ENCODE measurements at regions of chr10 and their contacts with region 1.

Region 1: DNA sequence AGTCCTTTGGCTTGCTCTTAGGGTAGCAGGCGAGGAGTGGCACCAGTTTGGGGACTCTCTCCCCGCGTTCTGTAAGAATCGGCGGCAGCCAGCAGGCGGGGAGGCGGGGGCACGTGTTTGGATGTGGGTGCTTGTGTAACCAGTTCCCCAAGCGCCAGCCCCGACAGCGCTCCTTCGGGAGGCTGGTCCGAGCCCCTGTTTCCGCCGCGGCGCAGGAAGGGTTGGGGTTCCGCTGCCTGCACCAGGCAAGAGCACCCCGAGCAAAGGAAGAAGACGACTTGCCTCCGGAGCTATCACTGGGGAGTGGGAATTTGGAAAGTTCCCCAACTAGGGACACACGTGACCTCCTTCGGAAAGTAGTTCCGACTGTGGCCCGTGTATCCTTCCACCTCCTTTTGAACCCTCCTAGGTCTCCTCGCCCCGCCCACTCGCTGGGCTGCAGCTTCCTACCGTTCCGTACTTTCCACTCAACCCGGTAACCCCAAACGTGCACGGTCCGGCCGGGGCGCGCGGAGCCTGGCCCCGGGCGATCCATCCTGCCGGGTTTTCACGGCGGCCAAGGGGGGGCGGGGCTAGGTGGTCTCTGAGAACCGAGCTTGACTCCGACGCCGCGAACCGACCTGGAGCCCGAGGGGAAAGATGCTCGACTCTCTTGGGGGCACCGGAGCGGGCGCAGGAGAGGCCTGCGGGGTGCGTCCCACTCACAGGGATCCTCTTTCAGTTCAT is 1.2 kb downstream of the KLLN start:
- DNase-seq: peak; percentile 82 to 88
- H3K4me3 ChIP-seq: peak overlapping the region; percentile 98
- H3K27ac ChIP-seq: peak overlapping the region; percentile 77
- H3K4me1 ChIP-seq: peaks cover 15% of the 10 kb centered on the region
- H3K27me3 ChIP-seq: no peaks in the 10 kb centered on the region
- CTCF ChIP-seq: no peak

Region 2: GRCh38 chr10:87782721-87783120 is 79.4 kb before region 1 on chr10:
- CTCF ChIA-PET with region 1: no interaction called
- POLR2A ChIA-PET with region 1: no interaction called
- intact Hi-C with region 1: no loop called
- DNase-seq: no peak
- H3K4me3 ChIP-seq: no peak overlapping the region
- H3K27ac ChIP-seq: no peak overlapping the region
- H3K4me1 ChIP-seq: no peaks in the 10 kb centered on the region
- H3K27me3 ChIP-seq: no peaks in the 10 kb centered on the region
- CTCF ChIP-seq: no peak

Region 3: DNA sequence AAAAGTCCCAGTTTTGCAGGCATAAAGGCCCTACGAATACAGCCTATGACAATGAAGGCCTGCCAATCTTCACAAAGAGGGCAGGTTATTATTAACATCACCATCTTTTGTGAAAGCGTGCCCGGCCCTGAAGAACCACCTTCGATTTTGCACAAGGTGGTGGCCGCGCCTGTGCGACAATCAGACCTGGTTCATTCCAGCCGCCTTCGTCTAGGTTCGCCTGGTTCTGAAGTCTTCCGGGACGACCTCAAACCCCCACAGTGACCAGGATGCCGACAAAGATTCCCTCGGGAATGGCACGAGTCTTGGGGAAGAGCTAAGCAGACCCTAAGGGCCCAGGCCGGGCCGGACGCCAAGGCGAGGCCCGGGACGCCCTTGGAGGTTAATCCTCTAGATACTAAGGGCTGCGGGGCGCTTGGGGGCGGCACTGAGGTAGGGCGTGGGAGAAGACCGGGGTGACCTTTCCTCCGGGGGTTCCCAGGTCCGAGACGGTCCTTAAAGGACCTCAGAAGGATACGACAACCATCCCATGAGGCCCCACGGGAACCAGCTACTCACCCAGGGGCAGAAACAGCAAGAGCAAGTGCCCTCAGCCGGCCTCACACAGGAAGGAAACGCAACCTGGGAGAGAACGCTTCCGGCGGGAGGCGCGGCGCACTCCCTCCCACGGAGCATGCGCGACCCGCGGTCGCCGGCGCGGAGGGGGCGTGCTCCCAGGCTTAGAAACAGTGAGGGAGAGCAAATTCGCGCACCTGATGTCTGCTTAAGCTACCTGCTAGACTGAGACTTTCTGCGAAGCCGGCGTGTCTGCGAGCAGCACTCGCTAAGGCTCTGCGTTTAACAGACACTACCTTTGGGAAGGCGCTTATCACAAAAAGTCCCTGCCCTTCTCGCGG is 44.3 kb before region 1 on chr10 and contains the start of gene ATAD1:
- CTCF ChIA-PET with region 1: no interaction called
- POLR2A ChIA-PET with region 1: interaction called, 19 read pairs
- intact Hi-C with region 1: loop called (anchors 5 kb)
- DNase-seq: peak; percentile 73 to 81
- H3K4me3 ChIP-seq: peak within 1 kb of the TSS; percentile 88
- H3K27ac ChIP-seq: peak within 1 kb of the TSS; percentile 80
- H3K4me1 ChIP-seq: peaks cover 24% of the 10 kb centered on the region
- H3K27me3 ChIP-seq: no peaks in the 10 kb centered on the region
- CTCF ChIP-seq: no peak
- total RNA-seq, gene ATAD1: 21.8 and 26.3 TPM in 2 replicates

Region 4: DNA sequence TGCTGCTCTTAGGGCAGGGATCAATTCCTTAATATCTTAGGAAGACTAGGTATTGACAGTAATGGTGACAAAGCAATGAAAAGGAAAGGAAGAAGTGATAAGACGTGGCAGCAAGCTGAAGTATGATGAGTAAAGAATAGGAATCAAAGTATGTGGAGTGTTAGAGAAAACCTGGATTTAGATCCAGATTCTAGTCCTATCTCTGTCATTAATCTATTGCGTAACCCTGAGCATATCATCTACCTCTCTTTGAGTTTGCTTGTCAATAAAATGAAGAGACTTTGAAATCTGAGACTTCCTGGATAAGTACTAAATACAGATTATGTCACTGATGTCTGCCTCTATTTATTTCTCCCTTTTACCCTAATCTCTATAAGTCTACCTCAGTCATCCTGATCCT is 90.5 kb after region 1 on chr10:
- CTCF ChIA-PET with region 1: no interaction called
- POLR2A ChIA-PET with region 1: no interaction called
- intact Hi-C with region 1: no loop called
- DNase-seq: no peak
- H3K4me3 ChIP-seq: no peak overlapping the region
- H3K27ac ChIP-seq: no peak overlapping the region
- H3K4me1 ChIP-seq: peaks cover 18% of the 10 kb centered on the region
- H3K27me3 ChIP-seq: no peaks in the 10 kb centered on the region
- CTCF ChIP-seq: no peak

Region 5: DNA sequence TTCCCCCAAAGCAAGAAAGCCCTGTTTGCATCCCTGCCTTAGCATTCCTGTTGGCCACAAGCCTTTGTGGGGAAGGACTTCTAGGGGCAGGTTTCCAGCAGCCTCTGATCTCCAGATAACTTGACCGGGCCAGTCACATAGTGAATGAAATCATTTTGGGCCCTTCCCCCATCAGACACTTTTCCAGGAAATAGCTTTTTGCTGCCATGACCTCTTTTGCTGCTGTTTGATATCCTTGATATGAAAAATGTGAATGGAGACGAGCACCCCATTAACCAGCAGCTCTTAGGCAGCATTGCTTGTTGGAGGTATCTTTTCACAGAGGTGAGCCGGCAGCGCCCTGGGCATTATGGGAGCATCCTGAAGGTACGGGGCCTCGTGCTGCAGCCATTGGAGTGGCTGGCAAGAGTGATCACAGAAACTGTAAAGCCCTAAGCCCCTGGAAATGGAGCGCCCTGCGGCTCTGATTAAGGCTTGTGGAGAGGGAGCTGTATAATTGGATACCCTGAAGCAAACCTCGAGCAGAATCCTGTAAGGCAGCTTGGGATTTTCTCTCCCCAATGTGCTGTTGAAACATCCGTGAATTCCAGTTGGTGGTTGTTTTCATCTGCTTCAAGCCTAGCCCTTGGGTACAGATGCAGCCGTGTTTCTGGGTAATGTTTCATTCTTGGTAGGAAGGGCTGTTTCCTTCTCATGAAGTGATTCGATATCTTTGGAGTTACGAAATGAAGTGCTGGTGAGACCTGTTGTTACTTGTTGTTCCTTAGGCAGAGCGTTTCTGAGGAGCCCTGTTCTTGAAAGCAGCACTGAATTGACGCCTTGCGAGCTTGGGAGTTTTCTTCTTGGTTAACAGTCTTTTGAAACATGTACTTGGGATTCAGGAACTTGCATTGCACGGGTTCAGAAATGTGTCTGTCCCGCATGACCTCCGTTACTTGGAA is 180.3 kb after region 1 on chr10:
- CTCF ChIA-PET with region 1: no interaction called
- POLR2A ChIA-PET with region 1: no interaction called
- intact Hi-C with region 1: loop called (anchors 2 kb)
- DNase-seq: peak; percentile 52 to 67
- H3K4me3 ChIP-seq: no peak overlapping the region
- H3K27ac ChIP-seq: no peak overlapping the region
- H3K4me1 ChIP-seq: peaks cover 29% of the 10 kb centered on the region
- H3K27me3 ChIP-seq: no peaks in the 10 kb centered on the region
- CTCF ChIP-seq: no peak

Region 6: DNA sequence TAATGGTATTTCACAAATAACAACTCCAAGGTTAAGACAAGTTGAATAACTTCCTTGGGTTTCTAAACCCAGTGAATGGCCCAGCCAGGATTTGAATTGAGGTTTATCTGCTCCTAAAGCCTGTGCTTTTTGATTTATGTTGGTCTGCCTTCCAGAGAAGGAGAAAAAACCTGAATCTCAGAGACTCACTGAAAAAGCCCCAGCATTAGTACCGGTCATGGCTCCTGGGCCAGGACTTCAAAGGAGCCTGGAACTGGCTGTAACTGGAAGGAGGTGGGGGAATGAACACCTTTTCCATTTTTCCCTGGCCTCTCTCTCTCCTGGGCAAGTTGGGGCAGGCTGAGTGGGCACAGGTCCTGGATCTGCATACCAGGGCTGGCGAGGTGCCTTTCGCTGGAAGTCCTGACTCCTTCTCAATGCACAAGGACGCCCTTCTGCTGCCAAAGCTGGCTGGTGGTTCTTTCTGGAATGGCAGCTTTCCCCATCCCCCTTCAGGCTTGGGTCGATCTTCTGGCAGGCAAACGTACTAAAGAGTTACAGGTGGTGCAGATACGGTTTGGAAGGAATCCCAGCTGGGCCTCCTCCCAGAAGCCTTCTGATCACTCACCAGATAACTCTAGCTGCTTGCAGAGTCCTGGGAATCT is 269.5 kb after region 1 on chr10:
- CTCF ChIA-PET with region 1: no interaction called
- POLR2A ChIA-PET with region 1: no interaction called
- intact Hi-C with region 1: loop called (anchors 5 kb)
- DNase-seq: peak in 1 of 2 experiments; percentile 78
- H3K4me3 ChIP-seq: no peak overlapping the region
- H3K27ac ChIP-seq: no peak overlapping the region
- H3K4me1 ChIP-seq: peaks cover 4% of the 10 kb centered on the region; the same call in 1 of the 2 replicates
- H3K27me3 ChIP-seq: no peaks in the 10 kb centered on the region
- CTCF ChIP-seq: no peak

Region 7: GRCh38 chr10:88254091-88254490 is 392.0 kb after region 1 on chr10:
- CTCF ChIA-PET with region 1: no interaction called
- POLR2A ChIA-PET with region 1: no interaction called
- intact Hi-C with region 1: loop called (anchors 10 kb)
- DNase-seq: peak; percentile 55 to 88
- H3K4me3 ChIP-seq: no peak overlapping the region
- H3K27ac ChIP-seq: peak overlapping the region; percentile 65
- H3K4me1 ChIP-seq: peaks cover 27% of the 10 kb centered on the region
- H3K27me3 ChIP-seq: no peaks in the 10 kb centered on the region
- CTCF ChIP-seq: no peak

Region 8: GRCh38 chr10:88553116-88553752 is 691.1 kb after region 1 on chr10:
- CTCF ChIA-PET with region 1: interaction called, 3 read pairs
- POLR2A ChIA-PET with region 1: no interaction called
- intact Hi-C with region 1: loop called (anchors 2 kb)
- DNase-seq: peak; percentile 11 to 78
- H3K4me3 ChIP-seq: no peak overlapping the region
- H3K27ac ChIP-seq: peak overlapping the region; percentile 3; the same call in 1 of the 2 replicates
- H3K4me1 ChIP-seq: peaks cover 6% of the 10 kb centered on the region
- H3K27me3 ChIP-seq: no peaks in the 10 kb centered on the region
- CTCF ChIP-seq: peak; percentile 76

Measured in PC-9 (cell line).